HEK293T (cell line): ENCODE measurements at regions of chr10 and their contacts with region 1.

Region 1: DNA sequence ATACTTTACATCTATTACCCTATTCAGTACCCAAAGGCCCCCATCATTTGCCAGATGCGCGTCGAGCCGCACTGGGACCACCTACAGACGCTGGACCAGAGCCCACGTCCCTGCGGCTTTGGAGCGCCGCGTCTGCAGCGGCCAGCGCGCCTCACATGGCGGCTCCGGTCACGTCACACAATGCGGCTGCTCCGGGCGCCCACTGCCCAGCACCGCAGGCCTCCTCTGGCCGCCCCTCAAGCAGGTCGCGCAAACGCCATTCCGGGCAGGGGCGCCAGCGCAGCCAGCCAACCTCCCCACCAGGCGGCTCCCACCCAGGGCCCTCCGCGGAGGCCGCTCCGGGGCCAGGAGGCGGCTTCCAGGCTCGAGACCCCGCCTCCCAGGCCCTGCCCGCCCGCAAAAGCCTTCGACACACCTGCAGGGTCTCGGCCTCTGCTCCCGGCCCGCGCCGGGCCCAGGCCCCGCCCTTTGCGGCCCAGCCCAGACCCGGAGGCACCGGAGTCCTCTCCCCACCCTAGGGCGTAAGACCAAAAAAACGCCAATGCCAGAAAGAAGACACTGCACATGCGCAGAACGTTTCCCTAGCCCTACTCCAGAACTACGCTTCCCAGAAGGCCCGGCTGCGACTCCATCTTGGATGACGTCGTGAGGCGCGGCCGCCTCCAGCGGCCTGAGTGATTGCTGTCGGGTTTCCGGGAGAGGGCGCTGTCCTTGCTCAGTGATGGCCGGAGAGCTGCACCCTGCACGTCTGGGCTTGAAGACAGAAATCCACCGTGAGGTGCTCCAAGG is at the start of gene ZNF25:
- DNase-seq: peak; percentile 86

Region 2: GRCh38 chr10:37992083-37992482 is 15.8 kb after region 1 on chr10:
- CTCF ChIA-PET with region 1: no interaction called
- POLR2A ChIA-PET with region 1: no interaction called
- DNase-seq: no peak

Region 3: GRCh38 chr10:38010119-38010903 is 34.0 kb after region 1 on chr10 and contains the start of gene ZNF33A:
- CTCF ChIA-PET with region 1: no interaction called
- POLR2A ChIA-PET with region 1: interaction called, 12 read pairs
- DNase-seq: peak; percentile 70